Heart left ventricle (tissue), 16 donors: ENCODE measurements at regions of chr7 and their contacts with region 1.

Region 1: GRCh38 chr7:27160546-27161213 is 4.2 kb upstream of the HOXA7 start:
- DNase-seq: peak; percentile 76 to 92 (median 85)
- ATAC-seq: peak; percentile 35 to 85 (median 82)
- H3K4me3 ChIP-seq: peak overlapping the region; percentile 40 to 67 (median 56)
- H3K27ac ChIP-seq: peak overlapping the region in 1 of 12 donors; percentile 71
- H3K4me1 ChIP-seq: peaks cover 0 to 61% (median 19%) of the 10 kb centered on the region in 12 donors
- H3K27me3 ChIP-seq: peaks cover 79 to 100% (median 98%) of the 10 kb centered on the region in 9 donors
- CTCF ChIP-seq: peak; percentile 97 to 100 (median 100)
- POLR2A ChIP-seq: no peak

Region 2: DNA sequence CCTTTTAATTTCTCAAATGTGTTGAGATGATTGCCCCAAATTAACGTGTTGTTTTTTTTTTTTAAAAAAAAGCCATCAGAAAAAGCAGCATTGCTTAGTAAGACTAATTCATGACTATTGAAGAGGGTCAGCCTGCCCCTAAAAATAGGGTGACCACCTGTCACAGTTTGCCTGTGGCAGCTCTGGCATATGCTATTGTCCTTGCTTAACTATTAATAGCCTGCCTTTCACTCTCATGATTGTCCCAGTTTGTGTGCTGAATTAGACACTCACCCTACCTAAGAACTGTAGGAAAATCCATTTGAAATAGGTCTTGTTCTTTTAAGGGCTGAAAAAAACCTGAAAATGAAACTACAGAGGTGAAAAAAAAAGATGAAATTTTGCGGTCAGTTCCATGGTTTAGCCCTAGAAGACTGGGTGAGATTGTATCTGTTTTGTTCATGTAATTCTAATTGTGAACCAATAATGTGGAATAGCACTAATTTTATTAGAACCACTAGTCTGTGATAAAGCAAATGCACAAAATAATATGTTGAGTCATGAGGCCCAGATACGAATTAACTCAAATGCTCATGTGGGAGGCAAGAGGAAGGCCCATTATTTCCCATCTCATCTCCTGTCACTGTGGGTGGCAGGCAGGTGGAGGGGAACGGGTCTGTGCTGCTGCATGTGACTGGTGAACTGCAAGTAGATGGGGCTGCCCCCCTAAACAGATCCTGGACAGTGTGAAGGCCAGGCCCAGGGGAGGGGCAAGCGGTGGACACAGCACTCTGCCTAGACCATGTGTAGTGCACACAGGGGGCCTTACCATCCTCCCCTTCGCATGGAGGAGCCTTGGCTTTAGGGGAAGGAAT is 1274.1 kb before region 1 on chr7:
- intact Hi-C with region 1: loop called in 7 of 10 experiments (anchors 5 to 10 kb)
- DNase-seq: no peak
- ATAC-seq: peak in 3 of 4 donors; percentile 57 to 75 (median 68)
- H3K4me3 ChIP-seq: no peak overlapping the region
- H3K27ac ChIP-seq: no peak overlapping the region
- H3K4me1 ChIP-seq: no peaks in the 10 kb centered on the region
- H3K27me3 ChIP-seq: peaks cover 0 to 72% (median 13%) of the 10 kb centered on the region in 9 donors
- CTCF ChIP-seq: no peak
- POLR2A ChIP-seq: no peak

Region 3: GRCh38 chr7:26078437-26079336 is 1082.0 kb before region 1 on chr7:
- intact Hi-C with region 1: loop called in 3 of 10 experiments (anchors 10 kb)
- DNase-seq: peak; percentile 25 to 83 (median 54)
- ATAC-seq: peak; percentile 58 to 83 (median 78)
- H3K4me3 ChIP-seq: no peak overlapping the region
- H3K27ac ChIP-seq: no peak overlapping the region
- H3K4me1 ChIP-seq: peaks cover 0 to 5% (median 0%) of the 10 kb centered on the region in 12 donors
- H3K27me3 ChIP-seq: peaks cover 4 to 85% (median 33%) of the 10 kb centered on the region in 9 donors
- CTCF ChIP-seq: peak in 10 of 12 donors; percentile 13 to 47 (median 32)
- POLR2A ChIP-seq: no peak

Region 4: GRCh38 chr7:26681819-26682418 is 478.8 kb before region 1 on chr7:
- intact Hi-C with region 1: loop called in 3 of 10 experiments (anchors 1 to 2 kb)
- DNase-seq: no peak
- ATAC-seq: no peak
- H3K4me3 ChIP-seq: no peak overlapping the region
- H3K27ac ChIP-seq: no peak overlapping the region
- H3K4me1 ChIP-seq: peaks cover 0 to 19% (median 0%) of the 10 kb centered on the region in 12 donors
- H3K27me3 ChIP-seq: peaks cover 0 to 35% (median 0%) of the 10 kb centered on the region in 9 donors
- CTCF ChIP-seq: peak; percentile 42 to 86 (median 72)
- POLR2A ChIP-seq: no peak